ENCODE measurements at regions of chr2 and their contacts with region 1.

Region 1: DNA sequence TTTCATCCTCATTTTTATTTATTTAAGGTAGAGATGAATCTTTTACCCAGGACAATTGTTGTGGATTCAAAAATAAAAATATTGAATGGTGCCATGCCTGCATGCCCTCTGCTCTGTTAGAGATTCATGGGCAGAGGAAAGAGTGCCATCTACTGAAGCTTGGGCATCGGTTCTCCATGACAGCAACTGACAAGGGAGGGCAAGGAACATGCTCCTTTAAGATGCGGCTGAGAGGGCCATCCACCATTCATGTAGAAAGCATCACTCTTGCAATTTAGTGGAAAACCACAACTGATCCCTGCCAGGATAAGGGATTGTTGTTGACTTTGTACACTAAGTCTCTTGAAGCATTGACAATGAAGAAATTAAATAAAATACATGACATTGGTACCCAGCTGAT is 79.9 kb downstream of the PARD3B start:
- DNase-seq: no peak
- H3K4me3 ChIP-seq: no peak overlapping the region
- H3K27ac ChIP-seq: no peak overlapping the region
- H3K4me1 ChIP-seq: no peaks in the 10 kb centered on the region
- H3K27me3 ChIP-seq: no peaks in the 10 kb centered on the region
- CTCF ChIP-seq: no peak
- EP300 ChIP-seq: no peak
- POLR2A ChIP-seq: no peak

Region 2: DNA sequence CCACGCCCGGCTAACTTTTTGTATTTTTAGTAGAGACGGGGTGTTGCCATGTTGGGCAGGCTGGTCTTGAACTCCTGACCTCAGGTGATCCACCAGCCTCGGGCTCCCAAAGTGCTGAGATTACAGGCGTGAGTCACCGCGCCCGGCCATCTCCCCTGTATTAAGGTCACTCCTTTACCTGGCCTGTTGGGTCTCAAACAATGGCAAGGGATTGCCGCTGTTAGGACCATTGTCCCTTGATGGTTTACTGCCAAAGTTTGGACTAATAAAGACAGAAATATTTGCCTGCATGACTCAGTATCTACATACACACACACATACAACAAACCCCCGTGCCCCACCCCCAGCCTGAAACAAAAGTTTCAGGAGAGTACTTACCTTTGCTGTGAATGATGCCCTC is 63.4 kb before region 1 on chr2:
- intact Hi-C with region 1: no loop called
- DNase-seq: no peak
- H3K4me3 ChIP-seq: no peak overlapping the region
- H3K27ac ChIP-seq: no peak overlapping the region
- H3K4me1 ChIP-seq: peaks cover 2% of the 10 kb centered on the region
- H3K27me3 ChIP-seq: no peaks in the 10 kb centered on the region
- CTCF ChIP-seq: no peak
- EP300 ChIP-seq: no peak
- POLR2A ChIP-seq: no peak

Region 3: DNA sequence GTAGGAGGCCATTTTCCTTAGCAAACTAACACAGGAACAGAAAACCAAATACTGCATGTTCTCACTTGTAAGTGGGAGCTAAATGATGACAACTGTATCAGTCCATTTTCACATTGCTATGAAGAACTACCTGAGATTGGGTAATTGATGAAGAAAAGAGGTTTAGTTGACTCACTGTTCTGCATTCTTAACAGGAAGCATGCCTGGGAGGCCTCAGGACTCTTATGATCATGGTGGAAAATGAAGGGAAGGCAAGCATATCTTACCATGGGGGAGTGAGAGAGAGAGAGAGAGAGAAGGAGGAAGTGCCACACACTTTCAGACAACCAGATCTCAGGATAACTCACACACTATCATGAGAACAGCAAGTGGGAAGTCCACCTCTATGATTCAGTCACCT is 25.4 kb after region 1 on chr2:
- intact Hi-C with region 1: loop called in 1 of 4 experiments (anchors 1 kb)
- DNase-seq: no peak
- H3K4me3 ChIP-seq: no peak overlapping the region
- H3K27ac ChIP-seq: no peak overlapping the region
- H3K4me1 ChIP-seq: peaks cover 2% of the 10 kb centered on the region
- H3K27me3 ChIP-seq: no peaks in the 10 kb centered on the region
- CTCF ChIP-seq: no peak
- EP300 ChIP-seq: no peak
- POLR2A ChIP-seq: no peak

Region 4: DNA sequence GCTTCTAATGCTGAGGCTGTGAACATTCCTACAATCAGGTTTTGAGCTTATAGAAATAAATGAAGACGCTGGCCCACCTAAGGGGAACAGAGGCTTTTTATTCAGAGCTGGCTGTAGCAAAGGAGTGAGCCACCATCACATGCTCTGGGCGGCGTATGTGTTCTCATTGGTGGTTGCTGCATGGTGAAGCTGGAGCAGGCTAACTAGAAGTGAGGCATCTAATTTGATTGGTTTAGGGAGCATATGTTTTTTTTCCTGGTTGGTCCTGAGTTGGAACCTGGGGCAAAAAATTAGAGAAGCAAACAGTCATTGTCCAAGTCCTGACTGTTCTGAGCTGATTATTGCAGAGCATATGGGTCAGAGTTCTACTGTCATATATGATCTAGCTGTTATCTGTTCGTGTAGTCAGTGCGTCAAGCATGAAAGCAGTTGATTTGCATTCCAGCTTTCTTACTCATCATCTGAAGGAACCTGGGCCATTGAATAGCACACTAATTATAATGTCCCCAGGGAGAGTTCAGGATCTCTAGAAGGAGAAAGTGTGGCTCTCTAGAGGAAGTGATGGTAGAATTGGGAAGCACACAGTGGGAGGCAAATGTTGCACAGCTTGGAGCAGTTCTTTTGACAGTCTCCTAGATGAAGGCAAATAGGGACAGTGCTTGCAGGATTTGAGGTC is 199.7 kb after region 1 on chr2:
- intact Hi-C with region 1: no loop called
- DNase-seq: no peak
- H3K4me3 ChIP-seq: no peak overlapping the region
- H3K27ac ChIP-seq: no peak overlapping the region
- H3K4me1 ChIP-seq: no peaks in the 10 kb centered on the region
- H3K27me3 ChIP-seq: no peaks in the 10 kb centered on the region
- CTCF ChIP-seq: no peak
- EP300 ChIP-seq: no peak
- POLR2A ChIP-seq: no peak

Region 5: GRCh38 chr2:205002390-205002789 is 377.2 kb after region 1 on chr2:
- intact Hi-C with region 1: no loop called
- DNase-seq: no peak
- H3K4me3 ChIP-seq: no peak overlapping the region
- H3K27ac ChIP-seq: no peak overlapping the region
- H3K4me1 ChIP-seq: no peaks in the 10 kb centered on the region
- H3K27me3 ChIP-seq: no peaks in the 10 kb centered on the region
- CTCF ChIP-seq: no peak
- EP300 ChIP-seq: no peak
- POLR2A ChIP-seq: no peak

Measured in ovary (tissue), 10 donors.